Heart right ventricle (tissue), 16 donors: ENCODE measurements at regions of chr2 and their contacts with region 1.

Region 1: DNA sequence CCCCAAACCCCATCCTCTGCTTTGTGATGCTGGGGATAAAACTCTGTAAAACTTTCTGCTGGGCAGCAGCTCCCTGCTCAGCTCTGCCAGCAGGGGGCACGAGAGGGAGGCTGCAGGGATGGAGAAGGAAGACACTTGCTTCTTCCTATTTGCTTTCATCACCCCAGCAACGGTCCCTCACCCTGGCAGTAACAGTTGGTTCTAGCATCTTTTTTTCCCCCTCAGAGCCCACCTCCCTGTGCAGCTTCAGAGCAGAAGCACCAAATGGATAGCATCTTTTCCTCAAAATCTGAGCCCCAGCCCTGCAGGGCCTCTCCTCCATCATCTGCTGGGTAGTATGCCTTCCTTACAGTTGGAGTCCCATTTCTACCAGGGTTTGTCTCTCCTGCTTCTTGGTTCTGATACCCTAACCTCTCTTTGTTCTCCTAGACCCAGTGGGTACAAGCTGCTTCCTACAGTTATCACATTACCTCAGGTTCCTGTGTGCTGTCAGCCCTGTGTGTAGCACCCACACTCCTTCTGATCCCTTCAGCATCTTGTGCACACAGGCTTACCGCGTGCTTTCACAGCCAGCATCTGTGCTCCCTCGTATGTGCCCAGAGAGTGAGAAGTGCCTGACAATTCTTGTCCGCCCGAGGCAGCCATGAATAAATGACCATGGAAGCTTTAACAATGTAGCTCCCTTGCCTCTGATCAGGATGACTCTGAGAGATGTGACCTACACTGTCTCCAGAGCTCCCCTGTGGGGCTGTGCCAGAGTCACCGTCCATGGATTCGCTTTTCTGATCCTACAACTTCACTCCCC is 14.5 kb downstream of the CKAP2L start:
- DNase-seq: peak; percentile 54 to 79
- ATAC-seq: peak in 6 of 8 donors; percentile 37 to 75 (median 67)
- H3K4me3 ChIP-seq: no peak overlapping the region
- H3K27ac ChIP-seq: peak overlapping the region in 1 of 10 donors; percentile 8
- H3K4me1 ChIP-seq: peaks cover 0 to 5% (median 0%) of the 10 kb centered on the region in 9 donors
- H3K27me3 ChIP-seq: peaks cover 0 to 5% (median 0%) of the 10 kb centered on the region in 7 donors
- CTCF ChIP-seq: peak; percentile 76 to 93 (median 89)

Region 2: GRCh38 chr2:112884869-112885505 is 135.0 kb after region 1 on chr2:
- intact Hi-C with region 1: loop called in 7 of 10 experiments (anchors 2 to 5 kb)
- DNase-seq: peak; percentile 19 to 26
- ATAC-seq: peak in 2 of 8 donors; percentile 37 to 67
- H3K4me3 ChIP-seq: no peak overlapping the region
- H3K27ac ChIP-seq: no peak overlapping the region
- H3K4me1 ChIP-seq: peaks cover 0 to 24% (median 0%) of the 10 kb centered on the region in 9 donors
- H3K27me3 ChIP-seq: peaks cover 0 to 6% (median 0%) of the 10 kb centered on the region in 7 donors
- CTCF ChIP-seq: peak; percentile 27 to 85 (median 63)

Region 3: GRCh38 chr2:112941753-112942658 is 192.0 kb after region 1 on chr2:
- intact Hi-C with region 1: loop called in 9 of 10 experiments (anchors 1 to 5 kb)
- DNase-seq: peak; percentile 46 to 52
- ATAC-seq: peak; percentile 52 to 80 (median 64)
- H3K4me3 ChIP-seq: no peak overlapping the region
- H3K27ac ChIP-seq: no peak overlapping the region
- H3K4me1 ChIP-seq: no peaks in the 10 kb centered on the region
- H3K27me3 ChIP-seq: peaks cover 0 to 16% (median 0%) of the 10 kb centered on the region in 7 donors
- CTCF ChIP-seq: peak; percentile 41 to 81 (median 68)

Region 4: GRCh38 chr2:112958428-112959108 is 208.6 kb after region 1 on chr2:
- intact Hi-C with region 1: loop called in 8 of 10 experiments (anchors 5 kb)
- DNase-seq: peak in 1 of 2 donors; percentile 23
- ATAC-seq: peak in 3 of 8 donors; percentile 56 to 73 (median 62)
- H3K4me3 ChIP-seq: no peak overlapping the region
- H3K27ac ChIP-seq: no peak overlapping the region
- H3K4me1 ChIP-seq: no peaks in the 10 kb centered on the region
- H3K27me3 ChIP-seq: peaks cover 0 to 25% (median 13%) of the 10 kb centered on the region in 7 donors
- CTCF ChIP-seq: peak; percentile 48 to 83 (median 75)